ENCODE measurements at regions of chr12 and their contacts with region 1.

Region 1: GRCh38 chr12:80412369-80412953 is 31.6 kb upstream of the PTPRQ start:
- DNase-seq: peak; percentile 69
- ATAC-seq: peak; percentile 81
- H3K4me3 ChIP-seq: no peak overlapping the region
- H3K27ac ChIP-seq: no peak overlapping the region
- H3K4me1 ChIP-seq: no peaks in the 10 kb centered on the region
- H3K27me3 ChIP-seq: no peaks in the 10 kb centered on the region
- CTCF ChIP-seq: peak; percentile 87
- POLR2A ChIP-seq: no peak
- RAD21 ChIP-seq: peak; percentile 94

Region 2: DNA sequence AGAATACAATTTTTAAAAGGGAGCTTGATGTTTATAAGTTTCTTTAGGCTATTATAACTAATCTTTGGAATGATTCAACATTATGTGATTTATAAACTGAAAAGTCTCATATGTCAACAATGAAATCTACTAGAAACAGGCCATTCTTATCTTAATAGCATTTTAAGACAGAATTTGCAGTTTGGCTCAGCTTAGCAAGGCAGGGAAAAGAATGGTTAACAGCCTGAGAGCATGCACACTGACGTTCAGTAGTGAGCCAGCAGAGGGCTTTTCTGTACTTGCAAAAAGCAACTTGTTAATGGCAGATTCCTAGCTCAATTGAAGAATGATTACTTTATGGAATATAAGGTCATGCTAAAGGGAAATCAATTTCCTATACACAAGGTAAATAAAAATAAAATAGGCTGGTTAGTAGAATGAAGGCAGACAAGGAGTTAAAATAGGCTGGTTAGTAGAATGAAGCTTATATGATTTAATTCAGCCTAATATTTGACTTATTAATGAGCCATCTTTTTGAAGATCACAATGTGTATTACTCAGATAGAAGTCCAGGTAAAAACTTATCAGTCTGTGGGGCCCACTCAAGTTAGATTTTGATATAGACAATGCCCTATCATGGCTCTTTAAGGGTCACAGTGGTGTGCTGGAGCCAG is 217.3 kb before region 1 on chr12:
- CTCF ChIA-PET with region 1: no interaction called
- POLR2A ChIA-PET with region 1: no interaction called
- dilution Hi-C with region 1: no loop called
- in situ Hi-C with region 1: no loop called
- intact Hi-C with region 1: loop called (anchors 5 kb)
- DNase-seq: peak; percentile 86
- ATAC-seq: peak; percentile 91
- H3K4me3 ChIP-seq: no peak overlapping the region
- H3K27ac ChIP-seq: no peak overlapping the region
- H3K4me1 ChIP-seq: peaks cover 3% of the 10 kb centered on the region; the same call in 1 of the 2 replicates
- H3K27me3 ChIP-seq: no peaks in the 10 kb centered on the region
- CTCF ChIP-seq: peak; percentile 82
- POLR2A ChIP-seq: no peak
- RAD21 ChIP-seq: peak; percentile 75

Region 3: GRCh38 chr12:80598004-80598606 is 185.6 kb after region 1 on chr12:
- CTCF ChIA-PET with region 1: no interaction called
- POLR2A ChIA-PET with region 1: no interaction called
- dilution Hi-C with region 1: no loop called
- in situ Hi-C with region 1: loop called (anchors 10 kb)
- intact Hi-C with region 1: loop called (anchors 2 kb)
- DNase-seq: peak; percentile 83
- ATAC-seq: peak; percentile 67
- H3K4me3 ChIP-seq: no peak overlapping the region
- H3K27ac ChIP-seq: no peak overlapping the region
- H3K4me1 ChIP-seq: peaks cover 11% of the 10 kb centered on the region; the same call in 1 of the 2 replicates
- H3K27me3 ChIP-seq: no peaks in the 10 kb centered on the region
- CTCF ChIP-seq: peak; percentile 63
- POLR2A ChIP-seq: no peak
- RAD21 ChIP-seq: peak; percentile 62

Region 4: DNA sequence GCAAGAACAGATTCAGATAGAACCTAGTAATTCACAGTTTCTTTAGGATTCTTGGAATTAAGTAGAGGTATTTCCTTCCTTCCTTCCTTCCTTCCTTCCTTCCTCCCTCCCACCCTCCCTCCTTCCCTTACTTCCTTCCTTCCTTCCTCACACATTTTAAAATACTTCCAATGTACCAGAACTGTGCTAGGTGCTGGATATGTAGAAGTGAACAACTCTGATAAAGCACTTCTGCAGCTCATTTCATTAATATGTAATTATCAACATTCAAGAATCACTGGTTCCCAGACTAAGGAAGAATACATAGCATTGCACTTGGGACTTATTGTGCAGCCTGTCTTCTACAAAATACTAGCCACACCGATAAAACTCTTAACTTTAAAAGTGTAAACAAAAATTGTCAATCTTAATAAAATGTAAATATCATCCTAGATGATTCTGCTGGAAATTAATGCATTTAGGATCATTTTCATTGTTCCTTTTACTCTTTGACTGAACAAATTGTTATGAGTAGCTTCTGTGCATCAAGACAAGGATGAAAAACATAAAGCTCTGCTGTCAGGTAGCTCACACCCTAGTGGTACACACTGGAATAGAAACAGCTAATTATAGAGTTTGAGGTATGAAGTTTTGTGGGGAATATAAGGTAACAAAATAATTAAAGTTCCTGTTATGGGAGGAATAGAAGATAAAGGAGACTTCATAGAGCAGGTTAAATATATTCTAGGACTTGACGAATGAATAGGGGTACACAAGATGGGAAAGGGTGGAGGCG is 195.1 kb after region 1 on chr12:
- CTCF ChIA-PET with region 1: no interaction called
- POLR2A ChIA-PET with region 1: no interaction called
- dilution Hi-C with region 1: no loop called
- in situ Hi-C with region 1: loop called (anchors 10 kb)
- intact Hi-C with region 1: no loop called
- DNase-seq: no peak
- ATAC-seq: no peak
- H3K4me3 ChIP-seq: no peak overlapping the region
- H3K27ac ChIP-seq: no peak overlapping the region
- H3K4me1 ChIP-seq: no peaks in the 10 kb centered on the region
- H3K27me3 ChIP-seq: no peaks in the 10 kb centered on the region
- CTCF ChIP-seq: no peak
- POLR2A ChIP-seq: no peak
- RAD21 ChIP-seq: no peak

Region 5: GRCh38 chr12:80912901-80913694 is 500.6 kb after region 1 on chr12:
- CTCF ChIA-PET with region 1: no interaction called
- POLR2A ChIA-PET with region 1: no interaction called
- dilution Hi-C with region 1: no loop called
- in situ Hi-C with region 1: no loop called
- intact Hi-C with region 1: no loop called
- DNase-seq: no peak
- ATAC-seq: peak; percentile 35; the same call in 1 of the 2 replicates
- H3K4me3 ChIP-seq: no peak overlapping the region
- H3K27ac ChIP-seq: no peak overlapping the region
- H3K4me1 ChIP-seq: 0 out of 2 replicates have a peak, but pooled peaks cover 3% of the 10 kb centered on the region
- H3K27me3 ChIP-seq: no peaks in the 10 kb centered on the region
- CTCF ChIP-seq: no peak
- POLR2A ChIP-seq: no peak
- RAD21 ChIP-seq: no peak

Region 6: GRCh38 chr12:80946594-80946993 is 534.1 kb after region 1 on chr12:
- CTCF ChIA-PET with region 1: no interaction called
- POLR2A ChIA-PET with region 1: no interaction called
- dilution Hi-C with region 1: no loop called
- in situ Hi-C with region 1: loop called (anchors 10 kb)
- intact Hi-C with region 1: loop called (anchors 5 kb)
- DNase-seq: peak; percentile 32
- ATAC-seq: peak; percentile 85
- H3K4me3 ChIP-seq: no peak overlapping the region
- H3K27ac ChIP-seq: no peak overlapping the region
- H3K4me1 ChIP-seq: no peaks in the 10 kb centered on the region
- H3K27me3 ChIP-seq: no peaks in the 10 kb centered on the region
- CTCF ChIP-seq: peak; percentile 55
- POLR2A ChIP-seq: no peak
- RAD21 ChIP-seq: peak; percentile 62

Region 7: DNA sequence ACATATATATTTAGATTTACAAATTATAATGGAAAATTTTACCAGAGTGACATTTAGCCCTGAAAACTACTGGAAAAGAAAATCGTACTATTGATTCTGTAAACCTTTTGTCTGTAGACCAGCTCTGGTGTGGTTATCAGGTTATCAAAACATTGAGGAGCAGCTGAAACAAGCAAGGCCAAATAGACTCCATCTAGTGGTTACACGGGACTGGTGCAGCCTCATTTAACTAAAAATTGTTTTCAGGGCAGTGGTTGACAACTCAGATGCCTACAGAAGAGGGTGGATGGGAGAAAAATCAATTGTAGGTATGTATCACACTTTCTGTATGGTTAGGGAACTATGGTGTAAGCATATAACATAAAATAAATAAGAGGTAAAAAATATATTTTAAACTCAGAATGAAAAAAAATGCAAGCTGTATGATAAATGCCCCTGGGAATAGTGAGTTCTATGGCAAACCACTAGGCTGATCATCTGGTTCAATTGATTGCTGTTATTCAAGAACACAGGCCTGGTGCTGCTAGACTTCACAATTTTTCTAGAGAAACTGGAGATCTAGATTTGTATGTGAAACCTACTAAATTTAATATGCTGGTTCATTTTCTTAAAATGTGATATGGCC is 716.6 kb after region 1 on chr12:
- CTCF ChIA-PET with region 1: interaction called, 3 read pairs
- POLR2A ChIA-PET with region 1: no interaction called
- dilution Hi-C with region 1: no loop called
- in situ Hi-C with region 1: no loop called
- intact Hi-C with region 1: loop called (anchors 1 kb)
- DNase-seq: peak; percentile 43
- ATAC-seq: peak; percentile 87
- H3K4me3 ChIP-seq: no peak overlapping the region
- H3K27ac ChIP-seq: no peak overlapping the region
- H3K4me1 ChIP-seq: no peaks in the 10 kb centered on the region
- H3K27me3 ChIP-seq: no peaks in the 10 kb centered on the region
- CTCF ChIP-seq: peak; percentile 72
- POLR2A ChIP-seq: no peak
- RAD21 ChIP-seq: peak; percentile 47

Region 8: GRCh38 chr12:81257947-81258551 is 845.6 kb after region 1 on chr12:
- CTCF ChIA-PET with region 1: no interaction called
- POLR2A ChIA-PET with region 1: no interaction called
- dilution Hi-C with region 1: no loop called
- in situ Hi-C with region 1: loop called (anchors 25 kb)
- intact Hi-C with region 1: loop called (anchors 2 kb)
- DNase-seq: peak; percentile 47
- ATAC-seq: peak; percentile 59; the same call in 1 of the 2 replicates
- H3K4me3 ChIP-seq: no peak overlapping the region
- H3K27ac ChIP-seq: no peak overlapping the region
- H3K4me1 ChIP-seq: no peaks in the 10 kb centered on the region
- H3K27me3 ChIP-seq: no peaks in the 10 kb centered on the region
- CTCF ChIP-seq: peak; percentile 55
- POLR2A ChIP-seq: no peak
- RAD21 ChIP-seq: peak; percentile 68

Measured in IMR-90 (cell line).